ENCODE measurements at regions of chr16 and their contacts with region 1.

Region 1: DNA sequence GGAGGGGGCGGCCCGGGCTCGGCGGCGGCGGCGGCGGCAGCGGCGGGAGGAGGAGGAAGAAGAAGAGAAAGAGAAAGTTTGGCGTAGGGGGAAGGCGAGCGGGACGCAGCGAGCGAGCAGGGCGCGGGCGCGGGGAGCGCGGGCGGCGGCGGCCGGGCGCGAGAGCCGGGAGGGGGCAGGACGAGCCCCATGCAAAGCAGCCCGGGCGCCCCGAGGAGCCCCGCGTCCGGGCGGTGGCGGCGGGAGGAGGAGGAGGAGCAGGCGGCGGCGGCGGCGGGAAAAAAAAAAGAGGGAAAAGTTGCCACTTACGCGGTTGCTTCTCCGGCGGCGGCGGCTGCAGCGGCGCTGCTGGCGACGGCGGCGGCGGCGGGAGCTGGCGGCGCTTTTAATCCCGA is 10.3 kb upstream of the ZFHX3 start:
- DNase-seq: no peak
- ATAC-seq: peak; percentile 57; the same call in 1 of the 2 replicates
- H3K4me3 ChIP-seq: peak overlapping the region in 1 of 2 experiments; percentile 51; a peak in 3 of 4 replicates
- H3K27ac ChIP-seq: no peak overlapping the region
- H3K4me1 ChIP-seq: peaks cover 14% of the 10 kb centered on the region
- H3K27me3 ChIP-seq: no peaks in the 10 kb centered on the region
- CTCF ChIP-seq: no peak

Region 2: DNA sequence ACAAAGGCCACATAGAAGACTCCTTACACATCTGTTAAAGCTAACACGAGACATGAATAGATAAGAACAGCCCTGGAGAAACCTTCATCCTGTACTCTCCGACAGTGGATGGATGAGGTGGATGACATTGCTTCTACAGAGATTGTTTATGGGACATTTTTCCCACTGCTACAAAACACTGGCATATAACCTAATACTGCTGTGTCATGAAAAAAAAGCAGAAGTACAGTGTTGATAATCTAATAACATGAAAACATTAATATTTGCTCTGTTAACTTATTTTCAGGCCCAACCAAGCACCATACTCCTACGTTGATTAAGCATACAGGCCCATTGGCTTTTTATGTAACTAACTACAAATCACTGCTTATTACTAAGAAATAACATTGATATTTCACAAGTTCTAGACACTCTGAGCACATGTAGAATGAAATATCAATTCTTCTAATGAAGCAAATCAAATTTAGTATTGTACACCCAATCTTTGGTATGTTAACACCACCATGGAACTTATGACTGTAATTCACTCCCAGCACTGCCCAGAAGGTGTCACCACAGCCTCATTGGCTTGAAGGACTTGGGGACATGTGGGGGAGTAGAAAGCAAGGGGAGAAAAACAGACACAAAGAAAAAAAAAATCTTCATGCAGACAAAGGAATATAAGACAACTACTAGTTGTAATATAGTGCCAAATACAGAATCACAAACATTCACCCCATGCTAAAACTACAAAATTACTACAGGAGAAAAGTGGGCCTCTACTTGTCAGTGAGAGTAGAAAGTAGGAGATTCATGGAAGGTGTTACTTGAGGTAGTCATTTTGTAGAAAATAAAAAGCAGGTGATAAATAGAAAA is 556.3 kb before region 1 on chr16:
- CTCF ChIA-PET with region 1: no interaction called
- POLR2A ChIA-PET with region 1: no interaction called
- in situ Hi-C with region 1: no loop called
- intact Hi-C with region 1: loop called (anchors 10 kb)
- DNase-seq: peak; percentile 38
- ATAC-seq: peak; percentile 78
- H3K4me3 ChIP-seq: no peak overlapping the region
- H3K27ac ChIP-seq: no peak overlapping the region
- H3K4me1 ChIP-seq: no peaks in the 10 kb centered on the region
- H3K27me3 ChIP-seq: no peaks in the 10 kb centered on the region
- CTCF ChIP-seq: peak; percentile 79

Region 3: DNA sequence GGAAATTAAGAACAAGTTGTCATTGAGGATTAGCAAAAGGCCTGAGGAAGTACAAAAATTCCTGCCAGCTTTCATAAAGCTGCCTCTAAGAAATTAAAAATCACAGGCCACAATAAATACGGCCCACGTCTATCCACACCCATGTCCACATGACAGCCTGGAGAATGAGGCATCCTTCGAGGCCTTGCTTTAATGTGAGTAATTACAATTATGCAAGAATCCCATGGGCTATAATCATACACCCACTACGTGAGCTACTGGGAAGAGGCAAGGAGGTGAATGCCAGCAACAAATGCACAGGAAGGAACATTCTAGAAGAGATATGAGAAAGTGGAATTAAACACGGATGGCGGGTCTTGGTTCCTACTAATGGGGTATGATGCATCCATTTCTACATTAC is 55.1 kb after region 1 on chr16:
- CTCF ChIA-PET with region 1: no interaction called
- POLR2A ChIA-PET with region 1: no interaction called
- in situ Hi-C with region 1: no loop called
- intact Hi-C with region 1: no loop called
- DNase-seq: no peak
- ATAC-seq: no peak
- H3K4me3 ChIP-seq: no peak overlapping the region
- H3K27ac ChIP-seq: no peak overlapping the region
- H3K4me1 ChIP-seq: no peaks in the 10 kb centered on the region
- H3K27me3 ChIP-seq: no peaks in the 10 kb centered on the region
- CTCF ChIP-seq: no peak

Region 4: GRCh38 chr16:73206151-73206707 is 148.0 kb after region 1 on chr16:
- CTCF ChIA-PET with region 1: no interaction called
- POLR2A ChIA-PET with region 1: no interaction called
- in situ Hi-C with region 1: no loop called
- intact Hi-C with region 1: no loop called
- DNase-seq: no peak
- ATAC-seq: no peak
- H3K4me3 ChIP-seq: no peak overlapping the region
- H3K27ac ChIP-seq: no peak overlapping the region
- H3K4me1 ChIP-seq: no peaks in the 10 kb centered on the region
- H3K27me3 ChIP-seq: no peaks in the 10 kb centered on the region
- CTCF ChIP-seq: no peak